Thyroid gland (tissue), 4 donors: ENCODE measurements at regions of chr19 and their contacts with region 1.

Region 1: DNA sequence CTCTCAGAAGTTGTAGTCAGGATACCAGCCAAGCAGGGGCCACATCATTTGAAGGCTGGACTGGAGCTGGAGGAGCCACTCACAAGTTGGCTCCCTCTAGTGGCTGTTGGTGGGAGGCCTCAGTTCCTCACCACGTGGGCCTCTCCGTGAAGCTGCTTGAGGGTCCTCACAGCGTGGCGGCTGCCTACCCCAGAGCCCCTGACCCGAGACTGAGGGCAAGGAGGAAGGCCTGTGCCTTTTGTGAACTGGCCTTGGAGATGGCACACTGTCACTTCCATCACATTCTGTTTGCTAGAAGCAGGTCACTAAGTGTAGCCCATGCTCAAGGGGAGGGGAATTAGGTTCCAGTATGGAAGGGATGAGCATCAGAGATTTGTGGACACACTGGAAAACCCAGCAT is 14.6 kb downstream of the GNA11 start:
- DNase-seq: peak; percentile 62 to 66
- H3K4me3 ChIP-seq: no peak overlapping the region
- H3K27ac ChIP-seq: peak overlapping the region in 2 of 3 donors; percentile 76 to 88
- H3K4me1 ChIP-seq: peaks cover 36 to 53% of the 10 kb centered on the region in 2 donors
- H3K27me3 ChIP-seq: no peaks in the 10 kb centered on the region
- CTCF ChIP-seq: peak; percentile 55 to 80 (median 66)
- POLR2A ChIP-seq: no peak

Region 2: GRCh38 chr19:2827840-2828489 is 280.8 kb before region 1 on chr19:
- intact Hi-C with region 1: no loop called
- DNase-seq: no peak
- H3K4me3 ChIP-seq: no peak overlapping the region
- H3K27ac ChIP-seq: no peak overlapping the region
- H3K4me1 ChIP-seq: no peaks in the 10 kb centered on the region
- H3K27me3 ChIP-seq: no peaks in the 10 kb centered on the region
- CTCF ChIP-seq: no peak
- POLR2A ChIP-seq: no peak

Region 3: GRCh38 chr19:2950286-2951124 is 158.3 kb before region 1 on chr19:
- intact Hi-C with region 1: loop called (anchors 5 kb)
- DNase-seq: peak; percentile 100
- H3K4me3 ChIP-seq: peak overlapping the region; percentile 19 to 68 (median 62)
- H3K27ac ChIP-seq: peak overlapping the region; percentile 83 to 98 (median 94)
- H3K4me1 ChIP-seq: peaks cover 22 to 35% of the 10 kb centered on the region in 2 donors
- H3K27me3 ChIP-seq: no peaks in the 10 kb centered on the region
- CTCF ChIP-seq: no peak
- POLR2A ChIP-seq: peak; percentile 66 to 88

Region 4: DNA sequence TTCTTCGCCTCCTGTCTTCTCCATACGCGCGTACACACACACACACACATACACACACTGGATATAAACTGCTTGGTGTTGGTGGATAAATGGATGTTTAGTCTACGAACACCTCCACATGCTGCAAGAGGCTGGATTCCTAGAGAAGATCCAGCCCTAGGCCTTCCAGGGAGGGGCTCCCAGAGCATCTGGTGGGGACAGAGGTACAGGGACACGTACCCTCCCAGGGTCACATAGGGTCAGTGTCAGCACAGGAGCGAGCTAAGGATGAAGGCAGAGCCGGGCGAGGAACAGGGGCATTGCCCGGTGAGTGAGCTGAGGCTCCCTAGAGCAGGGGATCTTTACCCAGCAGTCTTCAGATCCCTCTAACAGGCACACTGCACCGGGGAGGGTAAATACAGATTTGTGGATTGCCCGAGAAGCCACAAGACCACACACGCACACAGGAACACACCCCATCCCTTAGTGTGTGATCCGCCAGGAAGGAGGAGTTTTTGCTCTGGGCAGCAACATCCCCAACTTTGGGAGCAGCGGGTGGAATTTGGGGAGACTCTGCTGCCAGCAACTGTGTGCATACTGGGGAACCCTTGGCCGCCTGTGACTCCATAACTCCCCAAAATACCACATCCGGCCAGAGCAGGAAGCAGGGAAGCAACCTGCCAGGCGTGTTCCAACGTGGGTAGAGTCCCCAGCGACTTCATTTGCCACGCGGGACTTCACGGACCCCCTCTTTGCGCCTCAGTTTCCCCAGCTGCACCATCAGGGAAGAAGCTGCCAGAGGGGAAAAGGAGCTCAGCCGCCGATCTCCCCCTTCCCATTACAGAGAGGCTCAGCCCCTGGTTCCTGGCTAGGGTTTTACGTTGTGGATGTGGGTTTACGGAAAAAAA is 73.9 kb before region 1 on chr19:
- intact Hi-C with region 1: loop called (anchors 5 kb)
- DNase-seq: no peak
- H3K4me3 ChIP-seq: peak overlapping the region in 1 of 3 donors; percentile 36
- H3K27ac ChIP-seq: peak overlapping the region in 2 of 3 donors; percentile 77 to 95
- H3K4me1 ChIP-seq: peaks cover 11 to 28% of the 10 kb centered on the region in 2 donors
- H3K27me3 ChIP-seq: no peaks in the 10 kb centered on the region
- CTCF ChIP-seq: no peak
- POLR2A ChIP-seq: no peak

Region 5: DNA sequence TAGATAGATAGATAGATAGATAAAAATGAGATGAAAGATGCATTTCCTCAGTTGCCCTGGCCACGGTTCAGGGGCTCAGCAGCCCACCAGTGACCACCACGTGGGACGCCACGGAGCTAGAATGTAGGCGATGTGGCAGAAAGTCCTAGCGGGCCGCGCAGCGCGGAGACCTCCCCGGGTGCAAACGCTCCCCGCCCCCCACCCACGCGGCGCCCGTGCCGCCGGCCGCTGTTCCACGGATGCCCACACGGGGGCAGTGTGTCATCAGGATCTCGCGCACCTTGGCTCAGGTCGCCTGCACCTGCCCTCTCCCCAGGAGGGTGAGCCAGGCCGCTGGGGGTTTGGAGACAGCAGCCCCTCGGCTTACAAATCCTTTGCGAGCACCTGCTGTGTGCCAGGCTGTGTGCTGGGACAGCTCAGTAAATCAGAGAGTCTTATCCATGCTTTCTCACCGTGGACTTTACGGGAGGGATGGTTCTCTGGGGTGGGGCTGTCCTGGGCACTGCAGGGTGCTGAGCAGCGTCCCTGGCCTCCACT is 32.8 kb before region 1 on chr19:
- intact Hi-C with region 1: loop called (anchors 2 kb)
- DNase-seq: peak; percentile 59 to 66
- H3K4me3 ChIP-seq: no peak overlapping the region
- H3K27ac ChIP-seq: peak overlapping the region in 1 of 3 donors; percentile 34
- H3K4me1 ChIP-seq: peaks cover 11 to 30% of the 10 kb centered on the region in 2 donors
- H3K27me3 ChIP-seq: no peaks in the 10 kb centered on the region
- CTCF ChIP-seq: peak; percentile 73 to 97 (median 92)
- POLR2A ChIP-seq: no peak

Region 6: GRCh38 chr19:3195948-3196695 is 87.3 kb after region 1 on chr19:
- intact Hi-C with region 1: no loop called
- DNase-seq: no peak
- H3K4me3 ChIP-seq: no peak overlapping the region
- H3K27ac ChIP-seq: no peak overlapping the region
- H3K4me1 ChIP-seq: no peaks in the 10 kb centered on the region
- H3K27me3 ChIP-seq: no peaks in the 10 kb centered on the region
- CTCF ChIP-seq: no peak
- POLR2A ChIP-seq: no peak